ENCODE measurements at regions of chr1 and their contacts with region 1.

Region 1: DNA sequence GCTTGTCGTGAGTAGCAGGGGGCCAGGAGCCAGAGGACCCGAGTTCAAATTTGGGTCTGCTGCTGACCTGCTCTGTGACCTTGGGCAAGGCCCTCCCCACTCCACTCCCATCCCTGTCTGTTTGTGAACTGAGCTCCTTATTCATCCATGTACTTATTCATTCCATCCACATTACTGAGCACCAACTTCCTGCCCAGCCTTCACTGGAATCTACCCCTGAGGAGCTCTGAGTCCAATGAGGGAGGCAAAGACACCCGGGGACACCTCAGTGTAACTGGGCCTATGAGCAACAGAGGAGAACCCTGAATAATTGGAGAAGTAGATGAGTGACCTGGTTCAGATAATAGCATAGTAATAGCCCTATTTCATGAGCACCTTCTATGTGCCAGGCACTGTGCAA is 8.9 kb downstream of the BSND start:
- DNase-seq: peak; percentile 79
- H3K4me3 ChIP-seq: no peak overlapping the region
- H3K27ac ChIP-seq: peak overlapping the region; percentile 14
- H3K4me1 ChIP-seq: peaks cover 14% of the 10 kb centered on the region
- H3K27me3 ChIP-seq: no peaks in the 10 kb centered on the region
- CTCF ChIP-seq: no peak

Region 2: GRCh38 chr1:54944610-54945544 is 62.7 kb before region 1 on chr1:
- CTCF ChIA-PET with region 1: interaction called, 14 read pairs
- dilution Hi-C with region 1: no loop called
- in situ Hi-C with region 1: no loop called
- intact Hi-C with region 1: no loop called
- DNase-seq: peak; percentile 60
- H3K4me3 ChIP-seq: peak overlapping the region in 1 of 3 experiments; percentile 3
- H3K27ac ChIP-seq: no peak overlapping the region
- H3K4me1 ChIP-seq: peaks cover 12% of the 10 kb centered on the region
- H3K27me3 ChIP-seq: no peaks in the 10 kb centered on the region
- CTCF ChIP-seq: peak; percentile 88 to 89

Region 3: DNA sequence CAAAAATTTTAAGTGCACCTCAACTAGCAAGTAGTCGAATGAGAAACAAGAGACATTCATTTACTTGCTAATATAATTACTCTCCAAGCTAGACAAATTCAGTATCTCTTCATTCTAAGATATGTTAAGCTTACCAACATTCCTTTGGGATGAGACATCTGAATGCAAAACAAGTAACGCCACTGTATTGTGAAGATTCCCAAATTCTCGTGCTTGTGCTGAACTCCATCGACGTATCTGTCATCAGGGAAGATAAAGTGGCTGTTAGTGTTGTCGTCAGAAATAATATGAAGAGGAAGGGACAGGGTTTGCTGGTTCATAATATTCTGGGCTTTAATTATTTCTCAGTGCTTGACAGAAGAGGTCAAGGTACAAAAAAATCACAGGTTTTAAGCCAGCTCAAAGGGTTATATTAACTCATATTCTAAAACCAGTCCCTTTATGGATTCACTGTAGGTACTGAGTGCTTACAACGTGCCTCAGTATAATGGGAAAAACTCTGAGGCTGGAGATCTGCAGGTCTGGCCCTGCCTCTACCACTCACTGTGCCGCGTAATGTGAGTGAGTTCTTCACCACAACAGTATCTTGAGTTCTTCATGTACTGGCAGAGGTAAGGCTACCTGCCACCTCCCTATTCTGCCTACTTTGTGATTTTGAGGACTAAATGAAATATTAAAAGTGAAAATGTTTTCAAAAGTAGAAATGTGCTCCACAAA is 73.7 kb after region 1 on chr1:
- CTCF ChIA-PET with region 1: no interaction called
- dilution Hi-C with region 1: no loop called
- in situ Hi-C with region 1: no loop called
- intact Hi-C with region 1: no loop called
- DNase-seq: peak; percentile 54
- H3K4me3 ChIP-seq: no peak overlapping the region
- H3K27ac ChIP-seq: no peak overlapping the region
- H3K4me1 ChIP-seq: peaks cover 8% of the 10 kb centered on the region
- H3K27me3 ChIP-seq: no peaks in the 10 kb centered on the region
- CTCF ChIP-seq: no peak